ENCODE measurements at regions of chr2 and their contacts with region 1.

Region 1: DNA sequence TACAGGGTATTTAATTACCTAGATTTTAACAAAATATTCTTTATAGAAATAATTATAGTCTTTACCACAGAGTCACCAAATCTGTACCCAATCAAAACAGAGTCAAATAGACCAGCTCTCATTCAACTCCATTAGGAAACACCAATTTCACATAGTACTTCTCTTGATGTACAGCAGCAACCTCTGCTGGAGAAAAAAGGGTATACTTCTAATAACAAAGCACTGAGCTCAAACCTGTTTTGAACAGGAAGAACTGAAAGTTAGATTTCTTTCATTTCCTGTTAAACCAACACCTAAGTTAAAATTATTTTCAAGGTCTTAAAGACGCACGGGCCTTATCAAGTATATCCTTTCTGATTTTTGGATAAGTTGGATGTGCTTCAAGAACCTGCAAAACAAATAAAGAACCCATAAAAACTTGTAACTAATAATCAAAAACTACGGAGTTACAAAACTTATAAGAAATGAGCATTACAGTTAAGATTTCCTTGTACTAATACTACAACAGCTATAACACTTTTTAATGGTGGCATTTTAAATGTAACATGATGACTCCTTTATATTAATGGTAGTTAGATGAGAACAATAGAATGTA is 79.0 kb downstream of the TTC21B start:
- DNase-seq: no peak
- H3K4me3 ChIP-seq: no peak overlapping the region
- H3K27ac ChIP-seq: no peak overlapping the region
- H3K4me1 ChIP-seq: no peaks in the 10 kb centered on the region
- H3K27me3 ChIP-seq: no peaks in the 10 kb centered on the region
- CTCF ChIP-seq: peak; percentile 50 to 54

Region 2: DNA sequence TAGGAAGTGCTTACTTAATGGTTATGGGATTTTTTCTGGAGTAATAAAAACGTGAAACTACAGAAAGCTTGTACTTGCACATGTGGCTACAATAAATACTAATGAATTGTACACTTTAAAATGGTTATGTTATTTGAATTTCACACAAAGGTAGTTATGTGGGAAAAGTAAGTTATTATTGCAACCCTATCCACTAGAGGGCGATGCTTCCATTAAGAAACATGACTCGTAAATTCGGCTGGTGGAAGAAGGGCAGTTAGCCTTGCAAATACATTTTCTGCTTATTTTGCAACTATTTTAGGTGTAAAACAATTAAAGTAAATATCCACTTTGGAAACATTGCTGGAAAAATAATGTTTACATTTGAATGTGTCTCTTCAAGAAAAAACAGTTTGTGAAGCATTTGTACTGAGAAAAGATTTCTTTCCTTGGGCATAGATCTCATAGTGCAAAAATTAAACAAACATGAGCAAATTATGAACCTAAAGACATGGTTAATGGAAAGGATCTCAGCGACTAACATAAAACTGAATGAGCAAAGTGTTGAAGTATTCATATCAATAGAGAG is 473.2 kb before region 1 on chr2:
- intact Hi-C with region 1: loop called (anchors 10 kb)
- DNase-seq: no peak
- H3K4me3 ChIP-seq: no peak overlapping the region
- H3K27ac ChIP-seq: no peak overlapping the region
- H3K4me1 ChIP-seq: peaks cover 0 to 6% (median 0%) of the 10 kb centered on the region in 4 donors
- H3K27me3 ChIP-seq: no peaks in the 10 kb centered on the region
- CTCF ChIP-seq: peak; percentile 71 to 78

Region 3: GRCh38 chr2:165863810-165864261 is 10.7 kb before region 1 on chr2:
- intact Hi-C with region 1: loop called (anchors 1 kb)
- DNase-seq: no peak
- H3K4me3 ChIP-seq: no peak overlapping the region
- H3K27ac ChIP-seq: no peak overlapping the region
- H3K4me1 ChIP-seq: peaks cover 0 to 9% (median 3%) of the 10 kb centered on the region in 4 donors
- H3K27me3 ChIP-seq: no peaks in the 10 kb centered on the region
- CTCF ChIP-seq: no peak

Measured in tibial artery (tissue), 4 donors.